CD8-positive, alpha-beta T cell (primary cell): ENCODE measurements at regions of chr16 and their contacts with region 1.

Region 1: GRCh38 chr16:352547-353403 is at the start of gene AXIN1:
- DNase-seq: peak; percentile 97 to 100 (median 100)
- ATAC-seq: peak; percentile 87
- H3K4me3 ChIP-seq: peak within 1 kb of the TSS; percentile 53 to 58
- H3K4me3 Mint-ChIP-seq: peak within 1 kb of the TSS; percentile 91
- H3K27ac ChIP-seq: peak within 1 kb of the TSS; percentile 47 to 69
- H3K27ac Mint-ChIP-seq: peak within 1 kb of the TSS; percentile 89
- H3K4me1 ChIP-seq: peaks cover 61% of the 10 kb centered on the region
- H3K4me1 Mint-ChIP-seq: peaks cover 62% of the 10 kb centered on the region
- H3K27me3 ChIP-seq: no peaks in the 10 kb centered on the region
- H3K27me3 Mint-ChIP-seq: no peaks in the 10 kb centered on the region
- CTCF ChIP-seq: peak; percentile 17
- total RNA-seq, gene AXIN1: 25.4 to 28.6 TPM

Region 2: GRCh38 chr16:53346-54236 is 299.2 kb before region 1 on chr16 and contains the starts of genes POLR3K and SNRNP25:
- CTCF ChIA-PET with region 1: no interaction called
- POLR2A ChIA-PET with region 1: no interaction called
- intact Hi-C with region 1: loop called in 1 of 2 experiments (anchors 1 kb)
- DNase-seq: peak; percentile 96 to 99 (median 98)
- ATAC-seq: peak; percentile 97
- H3K4me3 ChIP-seq: peak within 1 kb of the TSS; percentile 91 to 98
- H3K4me3 Mint-ChIP-seq: peak within 1 kb of the TSS; percentile 97
- H3K27ac ChIP-seq: peak within 1 kb of the TSS; percentile 60
- H3K27ac Mint-ChIP-seq: peak within 1 kb of the TSS; percentile 85
- H3K4me1 ChIP-seq: peaks cover 21% of the 10 kb centered on the region
- H3K4me1 Mint-ChIP-seq: peaks cover 28% of the 10 kb centered on the region
- H3K27me3 ChIP-seq: no peaks in the 10 kb centered on the region
- H3K27me3 Mint-ChIP-seq: no peaks in the 10 kb centered on the region
- CTCF ChIP-seq: no peak
- total RNA-seq, gene POLR3K: 4.6 to 5.5 TPM
- total RNA-seq, gene SNRNP25: 4.9 to 5.4 TPM

Region 3: DNA sequence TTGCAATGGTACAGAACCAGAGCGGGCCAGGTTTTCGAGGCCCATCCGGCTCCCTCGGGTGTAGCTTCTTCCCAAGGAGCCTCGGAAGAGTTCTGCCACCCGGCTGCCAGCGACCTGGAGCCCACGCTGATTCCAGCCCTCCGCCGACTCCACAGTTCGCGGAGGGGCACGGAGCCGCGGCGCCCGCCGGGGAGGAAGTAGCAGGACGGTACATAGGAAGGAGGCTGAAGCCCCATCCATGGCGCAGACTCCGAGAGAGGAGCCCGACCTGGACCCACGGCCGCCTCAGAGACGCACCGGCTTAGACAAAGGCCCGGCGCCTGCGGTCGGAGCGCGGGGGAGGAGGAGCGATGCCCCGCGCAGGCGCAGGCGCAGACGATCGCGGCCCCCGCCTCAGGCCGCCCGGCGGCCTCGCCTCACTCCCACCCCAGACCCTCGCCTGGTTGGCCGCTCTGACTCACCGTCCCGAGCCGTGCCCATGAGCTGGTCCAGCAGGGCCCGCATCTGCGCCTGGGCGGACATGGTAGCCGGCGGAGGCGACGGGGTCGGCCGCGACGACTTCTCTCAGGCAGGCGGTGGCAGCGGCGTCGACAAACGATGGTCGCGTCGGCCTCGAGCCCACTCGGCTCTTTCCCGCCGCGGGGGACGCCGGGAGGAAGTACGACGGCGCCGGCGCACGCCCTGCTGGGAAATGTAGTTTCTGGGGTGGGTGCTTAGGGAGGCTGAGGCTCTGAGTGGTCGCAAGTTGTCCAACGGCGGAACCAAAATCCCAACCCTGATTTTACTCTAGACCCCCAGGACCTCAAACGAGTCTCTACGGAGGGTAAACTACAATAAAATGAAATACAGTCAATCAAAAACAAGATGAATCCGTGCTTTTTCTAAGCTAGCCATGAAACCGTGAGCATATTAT is 123.7 kb before region 1 on chr16 and contains the start of gene LUC7L:
- CTCF ChIA-PET with region 1: no interaction called
- POLR2A ChIA-PET with region 1: interaction called, 13 read pairs
- intact Hi-C with region 1: loop called in 1 of 2 experiments (anchors 1 kb)
- DNase-seq: peak; percentile 74 to 93 (median 85)
- ATAC-seq: peak; percentile 89
- H3K4me3 ChIP-seq: peak within 1 kb of the TSS; percentile 68 to 78
- H3K4me3 Mint-ChIP-seq: peak within 1 kb of the TSS; percentile 87
- H3K27ac ChIP-seq: peak within 1 kb of the TSS; percentile 84 to 92
- H3K27ac Mint-ChIP-seq: peak within 1 kb of the TSS; percentile 97
- H3K4me1 ChIP-seq: peaks cover 37% of the 10 kb centered on the region
- H3K4me1 Mint-ChIP-seq: peaks cover 36% of the 10 kb centered on the region
- H3K27me3 ChIP-seq: no peaks in the 10 kb centered on the region
- H3K27me3 Mint-ChIP-seq: no peaks in the 10 kb centered on the region
- CTCF ChIP-seq: no peak
- total RNA-seq, gene LUC7L: 136 to 142 TPM

Region 4: DNA sequence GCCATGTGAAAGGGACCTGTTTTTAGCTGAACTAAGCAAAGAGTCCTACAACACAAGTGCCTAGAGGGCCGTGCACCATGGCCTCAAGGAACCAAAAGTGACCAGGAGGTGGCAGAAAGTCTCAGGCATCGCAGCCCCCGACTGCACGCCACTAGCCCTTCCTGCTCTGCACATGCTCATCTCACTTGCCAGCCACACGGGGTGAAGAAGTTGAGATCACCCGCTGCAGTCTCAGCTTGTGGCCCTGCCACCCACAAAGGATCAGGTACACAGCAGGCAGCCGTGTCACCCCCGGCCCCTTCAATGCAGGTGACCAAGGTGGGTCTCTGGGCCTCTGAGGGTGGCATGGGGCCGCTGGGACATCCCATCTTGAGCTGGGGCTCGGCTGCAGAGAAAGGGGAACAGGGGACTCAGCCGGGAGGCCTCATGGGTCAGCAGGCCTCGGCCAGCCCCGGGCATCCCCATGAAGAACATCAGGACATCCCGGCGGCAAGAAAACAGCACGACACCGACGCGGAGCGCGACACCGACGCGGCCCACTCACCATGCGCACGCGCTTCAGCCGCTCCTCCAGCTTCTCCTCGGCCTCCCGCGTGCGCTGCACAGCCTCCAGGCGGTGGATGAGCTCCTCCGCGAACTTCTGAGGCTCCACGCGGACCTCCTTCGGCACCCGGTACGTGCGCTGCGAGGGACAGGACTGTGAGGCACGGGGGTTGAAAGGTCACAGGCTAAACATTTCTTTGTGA is 48.8 kb before region 1 on chr16:
- CTCF ChIA-PET with region 1: no interaction called
- POLR2A ChIA-PET with region 1: no interaction called
- intact Hi-C with region 1: loop called (anchors 1 to 5 kb)
- DNase-seq: peak in 2 of 9 experiments; percentile 42 to 49
- ATAC-seq: peak; percentile 44
- H3K4me3 ChIP-seq: no peak overlapping the region
- H3K4me3 Mint-ChIP-seq: no peak overlapping the region
- H3K27ac ChIP-seq: no peak overlapping the region
- H3K27ac Mint-ChIP-seq: no peak overlapping the region
- H3K4me1 ChIP-seq: no peaks in the 10 kb centered on the region
- H3K4me1 Mint-ChIP-seq: peaks cover 7% of the 10 kb centered on the region
- H3K27me3 ChIP-seq: no peaks in the 10 kb centered on the region
- H3K27me3 Mint-ChIP-seq: no peaks in the 10 kb centered on the region
- CTCF ChIP-seq: no peak

Region 5: DNA sequence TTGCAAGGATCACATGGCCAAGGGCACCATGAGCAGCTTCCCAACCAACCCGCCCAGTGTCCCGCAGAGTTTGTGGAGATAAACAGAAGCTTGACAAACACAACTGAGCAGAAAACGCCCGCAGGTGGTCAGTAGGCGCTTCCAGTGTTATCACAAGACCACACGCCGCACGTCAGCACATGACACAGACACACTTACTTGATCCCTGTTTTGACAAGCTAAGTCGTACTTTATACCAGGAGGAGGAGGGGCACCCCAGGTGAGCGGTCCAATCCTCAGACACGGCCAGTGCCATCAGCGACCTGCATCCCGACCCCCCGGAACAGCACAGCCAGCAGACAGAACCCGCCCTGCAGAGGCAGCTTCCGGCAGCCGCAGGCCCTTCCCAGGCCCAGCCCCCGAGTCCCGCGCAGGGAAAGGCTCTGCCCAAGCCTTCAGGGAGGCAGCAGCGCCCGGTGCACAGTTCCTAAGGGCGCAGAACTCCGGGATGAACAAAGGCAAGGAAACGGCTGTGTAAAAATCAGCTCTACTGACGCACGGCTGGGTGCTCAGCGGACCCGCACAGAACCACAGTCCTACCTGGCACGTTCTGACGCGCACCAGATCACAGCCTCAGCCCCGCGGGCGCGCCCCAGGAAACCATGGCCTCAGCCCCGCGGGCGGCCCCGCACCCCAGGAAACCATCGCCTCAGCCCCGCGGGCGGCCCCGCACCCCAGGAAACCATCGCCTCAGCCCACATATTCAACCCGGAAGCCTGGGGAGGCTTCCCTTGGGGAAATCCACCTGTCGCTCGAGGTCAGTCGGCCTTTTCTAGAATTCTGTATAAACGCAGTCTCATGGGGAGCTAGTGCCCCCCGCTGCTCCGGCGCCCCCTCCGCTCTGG is 28.1 kb before region 1 on chr16:
- CTCF ChIA-PET with region 1: interaction called, 3 read pairs
- POLR2A ChIA-PET with region 1: interaction called, 4 read pairs
- intact Hi-C with region 1: loop called (anchors 1 kb)
- DNase-seq: peak; percentile 46 to 93 (median 78)
- ATAC-seq: peak; percentile 72
- H3K4me3 ChIP-seq: peak overlapping the region; percentile 35 to 41
- H3K4me3 Mint-ChIP-seq: peak overlapping the region; percentile 75
- H3K27ac ChIP-seq: peak overlapping the region; percentile 68 to 71
- H3K27ac Mint-ChIP-seq: peak overlapping the region; percentile 92
- H3K4me1 ChIP-seq: peaks cover 64% of the 10 kb centered on the region
- H3K4me1 Mint-ChIP-seq: peaks cover 60% of the 10 kb centered on the region
- H3K27me3 ChIP-seq: no peaks in the 10 kb centered on the region
- H3K27me3 Mint-ChIP-seq: no peaks in the 10 kb centered on the region
- CTCF ChIP-seq: no peak

Region 6: DNA sequence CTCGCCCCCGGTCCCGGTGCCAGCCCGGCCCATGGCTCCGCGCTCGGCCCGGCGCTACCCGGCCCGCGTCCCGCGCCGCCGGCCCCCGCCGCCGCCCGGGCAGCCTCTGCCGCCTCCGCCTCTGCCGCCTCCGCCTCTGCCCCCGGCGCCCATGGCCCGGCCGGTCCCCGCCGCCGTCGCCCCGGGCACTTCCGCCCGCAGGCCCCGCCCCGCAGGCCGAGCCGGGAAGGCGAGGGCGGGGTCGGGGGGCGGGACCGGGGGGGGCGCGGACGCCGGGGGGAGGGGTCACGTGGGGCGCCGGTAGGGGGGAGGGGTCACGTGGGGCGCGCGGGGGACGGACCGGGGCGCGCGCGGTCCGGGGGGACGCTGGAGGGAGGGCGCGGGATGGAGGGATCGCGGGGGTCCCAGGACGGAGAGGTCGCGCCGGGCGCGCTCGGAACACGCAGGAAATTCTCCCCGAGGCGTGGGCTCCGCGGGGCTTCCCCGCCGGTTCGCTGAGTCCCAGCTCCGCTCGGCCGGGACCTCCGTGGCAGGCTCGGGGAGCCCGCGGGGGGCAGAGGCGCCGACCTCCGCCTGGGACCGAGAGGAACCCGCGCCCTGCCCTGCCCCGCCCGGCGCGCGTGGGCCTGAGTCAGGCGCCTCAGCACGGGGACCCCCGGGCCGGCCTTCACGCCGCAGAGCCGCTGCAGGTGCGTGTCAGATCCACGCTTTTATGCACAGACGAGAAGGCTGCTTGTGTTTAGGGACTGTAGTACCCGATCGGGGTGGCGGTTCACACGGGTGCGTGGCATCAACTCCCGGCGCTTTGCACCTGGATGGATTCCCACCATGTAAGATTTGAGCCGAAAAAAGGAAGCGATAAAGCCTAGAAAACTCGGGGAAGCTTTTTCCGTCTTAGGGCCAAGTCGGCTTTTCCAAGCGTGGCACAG is 29.3 kb after region 1 on chr16 and contains the start of gene PGAP6:
- CTCF ChIA-PET with region 1: interaction called, 4 read pairs
- POLR2A ChIA-PET with region 1: interaction called, 3 read pairs
- intact Hi-C with region 1: loop called (anchors 1 kb)
- DNase-seq: peak in 8 of 9 experiments; percentile 50 to 85 (median 70)
- ATAC-seq: peak; percentile 57
- H3K4me3 ChIP-seq: peak within 1 kb of the TSS; percentile 63 to 74
- H3K4me3 Mint-ChIP-seq: peak within 1 kb of the TSS; percentile 93
- H3K27ac ChIP-seq: peak within 1 kb of the TSS in 1 of 2 experiments; percentile 68
- H3K27ac Mint-ChIP-seq: peak within 1 kb of the TSS; percentile 86
- H3K4me1 ChIP-seq: peaks cover 34% of the 10 kb centered on the region
- H3K4me1 Mint-ChIP-seq: peaks cover 29% of the 10 kb centered on the region
- H3K27me3 ChIP-seq: no peaks in the 10 kb centered on the region
- H3K27me3 Mint-ChIP-seq: no peaks in the 10 kb centered on the region
- CTCF ChIP-seq: no peak
- total RNA-seq, gene PGAP6: 57.9 to 60.8 TPM

Region 7: DNA sequence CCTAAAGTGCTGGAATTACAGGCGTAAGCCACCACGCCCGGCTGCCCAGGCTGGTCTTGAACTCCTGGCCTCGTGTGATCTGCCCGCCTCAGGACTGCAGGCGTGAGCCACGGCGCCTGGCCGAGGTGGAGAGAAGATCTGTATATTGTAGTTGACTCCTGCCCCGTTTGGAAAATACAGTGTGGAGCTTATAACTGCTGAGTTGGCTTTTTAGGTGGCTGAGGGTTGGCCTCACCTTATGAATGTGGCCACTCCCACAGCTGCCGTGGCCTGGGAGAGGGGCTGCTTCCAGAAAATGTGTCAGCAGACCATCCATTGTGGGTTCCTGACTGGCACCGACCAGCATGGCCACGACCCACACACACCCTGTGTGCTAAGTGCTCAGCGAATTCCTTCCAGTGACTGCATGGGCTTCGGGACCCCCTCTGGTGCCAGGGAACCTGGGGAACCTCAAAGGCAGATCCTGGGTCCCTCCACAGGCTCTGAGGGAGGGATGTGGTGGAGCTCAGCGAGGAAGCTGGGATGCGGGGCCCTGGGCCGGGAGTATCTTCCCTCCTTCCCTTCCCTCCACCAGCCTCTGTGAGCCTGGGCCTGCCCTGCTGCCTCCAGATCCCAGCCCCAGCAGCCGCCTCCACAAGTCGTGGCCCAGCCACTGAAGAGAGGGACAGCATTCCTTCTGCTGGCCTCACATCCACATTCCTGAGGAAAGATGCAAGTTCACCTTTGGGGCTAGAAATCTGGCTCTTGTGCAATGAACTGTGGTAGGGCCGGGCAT is 61.8 kb after region 1 on chr16:
- CTCF ChIA-PET with region 1: no interaction called
- POLR2A ChIA-PET with region 1: no interaction called
- intact Hi-C with region 1: no loop called
- DNase-seq: no peak
- ATAC-seq: no peak
- H3K4me3 ChIP-seq: no peak overlapping the region
- H3K4me3 Mint-ChIP-seq: no peak overlapping the region
- H3K27ac ChIP-seq: no peak overlapping the region
- H3K27ac Mint-ChIP-seq: no peak overlapping the region
- H3K4me1 ChIP-seq: no peaks in the 10 kb centered on the region
- H3K4me1 Mint-ChIP-seq: no peaks in the 10 kb centered on the region
- H3K27me3 ChIP-seq: no peaks in the 10 kb centered on the region
- H3K27me3 Mint-ChIP-seq: no peaks in the 10 kb centered on the region
- CTCF ChIP-seq: no peak

Region 8: DNA sequence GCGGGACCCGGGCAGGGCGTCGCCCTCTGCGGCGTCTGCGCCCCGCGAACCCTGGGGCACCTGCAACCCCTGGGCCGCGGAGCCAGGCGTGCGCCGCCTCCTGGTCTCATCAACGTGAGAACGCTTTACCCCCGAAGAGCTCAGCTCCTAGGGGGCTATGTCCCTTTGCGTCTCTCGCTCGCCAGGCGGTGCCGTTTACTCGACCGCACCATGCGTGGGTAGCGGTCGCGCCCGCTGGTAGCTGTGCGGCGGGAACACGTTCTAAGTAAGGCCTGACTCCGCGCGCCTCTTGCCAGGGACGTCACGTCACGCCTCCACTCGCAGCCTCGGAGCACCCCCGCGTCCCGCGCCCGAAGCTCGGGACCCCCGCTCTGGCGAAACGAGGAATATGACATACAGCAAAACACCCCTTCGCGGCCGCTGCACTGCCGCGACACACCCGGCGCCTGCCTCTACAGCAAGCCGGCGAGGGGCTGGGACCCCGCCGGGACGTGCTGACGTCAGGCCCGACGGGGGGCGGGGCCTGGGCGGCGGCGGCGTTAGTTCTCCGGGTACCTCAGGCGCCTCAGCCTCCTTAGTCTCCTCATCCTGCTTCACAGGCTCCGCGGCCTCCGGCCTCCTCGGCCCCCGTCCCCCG is 72.4 kb after region 1 on chr16 and contains the start of gene RAB11FIP3:
- CTCF ChIA-PET with region 1: no interaction called
- POLR2A ChIA-PET with region 1: interaction called, 3 read pairs
- intact Hi-C with region 1: loop called (anchors 1 kb)
- DNase-seq: peak; percentile 66 to 92 (median 83)
- ATAC-seq: peak; percentile 89
- H3K4me3 ChIP-seq: peak within 1 kb of the TSS; percentile 78 to 86
- H3K4me3 Mint-ChIP-seq: peak within 1 kb of the TSS; percentile 90
- H3K27ac ChIP-seq: peak within 1 kb of the TSS; percentile 81 to 93
- H3K27ac Mint-ChIP-seq: peak within 1 kb of the TSS; percentile 96
- H3K4me1 ChIP-seq: peaks cover 21% of the 10 kb centered on the region
- H3K4me1 Mint-ChIP-seq: peaks cover 36% of the 10 kb centered on the region
- H3K27me3 ChIP-seq: peaks cover 0 to 3% of the 10 kb centered on the region in 2 experiments
- H3K27me3 Mint-ChIP-seq: peaks cover 3% of the 10 kb centered on the region
- CTCF ChIP-seq: peak; percentile 40
- total RNA-seq, gene RAB11FIP3: 26.4 to 27.5 TPM